Activated CD8-positive, alpha-beta T cell treated with anti-CD3 and anti-CD28 coated beads for 36 hours (primary cell): ENCODE measurements at regions of chr2 and their contacts with region 1.

Region 1: GRCh38 chr2:122451040-122451439 is 695.6 kb downstream of the TSN start:
- DNase-seq: no peak
- ATAC-seq: no peak
- H3K4me3 Mint-ChIP-seq: no peak overlapping the region
- H3K27ac Mint-ChIP-seq: no peak overlapping the region
- H3K4me1 Mint-ChIP-seq: no peaks in the 10 kb centered on the region
- H3K27me3 Mint-ChIP-seq: no peaks in the 10 kb centered on the region
- CTCF ChIP-seq: peak; percentile 25

Region 2: DNA sequence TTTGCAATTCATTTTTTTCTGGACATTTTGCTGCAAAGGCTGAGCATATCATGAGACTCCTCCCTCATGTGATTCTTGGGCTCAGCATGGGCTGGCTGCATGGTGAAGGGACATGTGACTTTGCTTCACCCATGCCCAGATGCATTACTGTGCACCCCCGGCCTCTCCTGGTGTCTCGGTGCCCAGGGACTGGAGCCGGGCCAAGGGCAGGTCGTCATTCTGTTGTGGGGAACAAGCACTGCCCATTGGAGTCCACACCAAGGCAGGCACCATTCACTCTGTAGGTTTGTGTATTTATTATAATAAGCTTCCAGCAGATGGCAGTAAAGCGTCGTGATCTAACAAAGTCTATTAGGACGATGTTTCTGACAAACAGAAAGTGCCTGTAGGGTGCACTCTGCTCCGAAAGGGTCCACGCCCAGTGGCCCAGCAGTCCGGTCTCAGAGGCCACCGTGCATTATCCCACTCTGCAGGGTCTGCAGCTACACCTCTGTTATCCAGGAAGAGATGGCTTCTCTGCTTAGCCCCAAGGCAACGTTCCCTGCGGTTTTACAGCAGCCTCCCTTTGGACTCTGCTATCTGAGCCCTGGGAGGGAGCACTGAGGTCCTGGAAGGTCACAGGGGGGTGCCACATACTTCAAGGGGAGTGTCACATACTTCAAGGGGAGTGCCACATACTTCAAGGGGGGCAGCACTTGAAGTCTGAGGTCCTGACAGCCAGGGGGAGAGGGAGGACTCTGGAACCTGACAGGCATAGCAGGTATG is 476.0 kb before region 1 on chr2:
- CTCF ChIA-PET with region 1: no interaction called
- POLR2A ChIA-PET with region 1: no interaction called
- intact Hi-C with region 1: loop called (anchors 10 kb)
- DNase-seq: peak; percentile 47
- ATAC-seq: peak; percentile 96
- H3K4me3 Mint-ChIP-seq: no peak overlapping the region
- H3K27ac Mint-ChIP-seq: no peak overlapping the region
- H3K4me1 Mint-ChIP-seq: peaks cover 2% of the 10 kb centered on the region
- H3K27me3 Mint-ChIP-seq: no peaks in the 10 kb centered on the region
- CTCF ChIP-seq: peak; percentile 66

Region 3: DNA sequence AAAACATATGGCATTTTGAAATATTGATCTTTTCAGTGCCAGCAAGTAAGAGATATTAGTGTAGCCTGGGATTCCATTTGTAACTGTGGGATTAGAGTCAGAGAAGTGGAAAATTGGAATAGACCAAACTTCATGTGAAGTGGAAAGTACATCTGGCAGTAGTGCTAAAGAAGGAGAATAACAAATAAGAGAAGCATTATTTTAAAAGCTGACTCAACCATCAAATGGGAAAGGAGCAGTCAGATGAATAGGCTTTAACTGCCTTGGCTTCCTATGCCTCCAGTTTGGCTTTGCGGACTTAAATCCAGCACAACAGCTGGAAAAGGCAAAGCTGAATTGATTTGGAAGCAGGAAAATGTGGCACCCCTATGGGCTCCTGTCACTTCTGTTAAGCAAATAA is 72.5 kb before region 1 on chr2:
- CTCF ChIA-PET with region 1: no interaction called
- POLR2A ChIA-PET with region 1: no interaction called
- intact Hi-C with region 1: no loop called
- DNase-seq: no peak
- ATAC-seq: no peak
- H3K4me3 Mint-ChIP-seq: no peak overlapping the region
- H3K27ac Mint-ChIP-seq: no peak overlapping the region
- H3K4me1 Mint-ChIP-seq: no peaks in the 10 kb centered on the region
- H3K27me3 Mint-ChIP-seq: no peaks in the 10 kb centered on the region
- CTCF ChIP-seq: no peak

Region 4: GRCh38 chr2:122469147-122469546 is 18.1 kb after region 1 on chr2:
- CTCF ChIA-PET with region 1: no interaction called
- POLR2A ChIA-PET with region 1: no interaction called
- intact Hi-C with region 1: no loop called
- DNase-seq: no peak
- ATAC-seq: no peak
- H3K4me3 Mint-ChIP-seq: no peak overlapping the region
- H3K27ac Mint-ChIP-seq: no peak overlapping the region
- H3K4me1 Mint-ChIP-seq: no peaks in the 10 kb centered on the region
- H3K27me3 Mint-ChIP-seq: no peaks in the 10 kb centered on the region
- CTCF ChIP-seq: no peak

Region 5: GRCh38 chr2:122610948-122611609 is 160.0 kb after region 1 on chr2:
- CTCF ChIA-PET with region 1: no interaction called
- POLR2A ChIA-PET with region 1: no interaction called
- intact Hi-C with region 1: no loop called
- DNase-seq: no peak
- ATAC-seq: no peak
- H3K4me3 Mint-ChIP-seq: no peak overlapping the region
- H3K27ac Mint-ChIP-seq: no peak overlapping the region
- H3K4me1 Mint-ChIP-seq: no peaks in the 10 kb centered on the region
- H3K27me3 Mint-ChIP-seq: no peaks in the 10 kb centered on the region
- CTCF ChIP-seq: no peak